ENCODE measurements at regions of chr14 and their contacts with region 1.

Region 1: GRCh38 chr14:32576088-32576795 is 247.1 kb downstream of the AKAP6 start:
- DNase-seq: peak in 2 of 5 donors; percentile 35 to 38
- ATAC-seq: peak; percentile 57 to 81 (median 78)
- H3K4me3 ChIP-seq: peak overlapping the region in 6 of 12 donors; percentile 2 to 43 (median 24)
- H3K27ac ChIP-seq: peak overlapping the region in 3 of 12 donors; percentile 2 to 23 (median 11)
- H3K4me1 ChIP-seq: peaks cover 0 to 43% (median 14%) of the 10 kb centered on the region in 12 donors
- H3K27me3 ChIP-seq: no peaks in the 10 kb centered on the region
- CTCF ChIP-seq: peak; percentile 90 to 98 (median 95)
- POLR2A ChIP-seq: no peak

Region 2: DNA sequence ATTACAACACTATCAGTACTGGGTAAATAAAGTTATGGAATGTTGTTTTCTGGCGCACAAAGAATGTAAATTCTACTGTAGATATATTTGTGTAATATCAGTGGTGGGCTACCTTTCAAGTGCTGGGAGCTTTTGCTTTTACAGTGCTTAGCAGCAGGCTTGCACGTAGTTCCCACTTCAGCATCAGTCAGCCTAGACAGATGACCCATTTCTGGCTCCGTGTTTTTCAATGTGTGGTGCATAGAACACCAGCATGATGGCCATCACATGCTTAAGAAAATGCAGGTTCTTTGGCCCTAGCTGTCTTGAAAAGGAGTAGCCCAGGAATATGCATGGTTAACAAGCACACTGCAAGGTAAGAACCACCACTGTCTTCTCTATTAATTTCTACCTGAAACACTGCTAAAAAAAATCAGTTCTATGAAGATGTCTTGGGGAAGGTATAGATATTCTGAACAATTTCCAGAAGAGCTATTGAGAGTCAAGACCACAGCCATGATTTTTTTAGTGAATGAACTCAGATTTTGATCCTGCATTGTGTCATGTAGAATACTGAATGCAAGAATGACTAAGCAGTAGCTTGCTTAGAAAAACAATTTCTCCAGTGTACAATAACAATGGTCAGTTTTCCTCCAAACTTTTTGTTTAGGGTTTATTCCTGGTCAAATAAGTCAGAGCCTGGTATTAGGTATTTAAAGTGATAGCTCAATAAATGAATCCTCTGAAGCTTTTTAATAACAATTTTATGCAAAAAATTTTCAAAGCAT is 51.5 kb before region 1 on chr14:
- intact Hi-C with region 1: no loop called
- DNase-seq: no peak
- ATAC-seq: peak in 3 of 4 donors; percentile 24 to 42 (median 36)
- H3K4me3 ChIP-seq: no peak overlapping the region
- H3K27ac ChIP-seq: peak overlapping the region in 2 of 12 donors; percentile 18 to 37
- H3K4me1 ChIP-seq: peaks cover 0 to 16% (median 2%) of the 10 kb centered on the region in 12 donors
- H3K27me3 ChIP-seq: no peaks in the 10 kb centered on the region
- CTCF ChIP-seq: no peak
- POLR2A ChIP-seq: no peak

Region 3: DNA sequence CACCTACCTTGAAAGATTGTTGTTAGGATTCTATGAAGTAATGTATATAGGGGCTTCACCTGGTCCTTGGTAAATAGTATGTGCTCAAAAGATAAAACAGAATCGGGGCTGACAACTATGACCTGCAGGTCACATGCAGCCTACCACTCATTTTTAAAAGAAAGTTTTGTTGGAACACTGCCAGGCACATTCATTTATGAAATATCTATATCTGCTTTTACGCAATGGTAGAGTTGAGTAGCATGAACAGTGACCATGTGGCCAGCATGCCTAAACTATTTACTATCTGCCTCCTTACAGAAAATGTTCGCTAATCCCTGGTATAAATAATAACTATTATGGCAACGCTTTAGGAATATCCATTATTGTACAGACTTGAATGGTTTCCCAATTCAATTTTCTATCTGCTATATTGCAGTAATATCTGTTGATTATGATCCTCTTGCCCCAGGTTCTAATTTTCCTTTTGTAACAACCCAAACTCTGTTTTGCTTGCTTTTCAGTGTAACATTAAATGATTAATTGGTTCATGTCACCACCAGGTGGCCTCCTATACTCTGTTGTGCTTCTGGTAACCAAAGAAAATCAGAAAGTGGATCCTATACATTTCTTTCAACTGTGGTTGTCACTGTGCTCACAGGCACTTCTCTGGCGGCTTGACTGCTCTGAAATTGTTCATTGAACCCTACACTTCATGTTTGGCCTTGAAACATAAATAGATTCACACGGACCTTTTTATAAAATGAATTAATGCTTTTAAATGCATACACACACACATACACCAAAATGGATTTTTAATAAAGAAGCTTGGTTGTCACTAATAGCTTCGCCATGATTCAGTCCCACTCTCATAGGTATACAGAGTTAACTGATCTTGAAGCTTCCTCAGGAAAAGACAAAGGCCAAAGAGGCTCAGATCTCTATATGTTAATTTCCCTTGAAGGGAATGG is 134.8 kb after region 1 on chr14:
- intact Hi-C with region 1: loop called in 3 of 10 experiments (anchors 5 to 10 kb)
- DNase-seq: peak in 1 of 5 donors; percentile 17
- ATAC-seq: peak in 1 of 4 donors; percentile 38
- H3K4me3 ChIP-seq: peak overlapping the region in 4 of 12 donors; percentile 7 to 24 (median 18)
- H3K27ac ChIP-seq: peak overlapping the region in 4 of 12 donors; percentile 12 to 79 (median 66)
- H3K4me1 ChIP-seq: peaks cover 5 to 45% (median 34%) of the 10 kb centered on the region in 12 donors
- H3K27me3 ChIP-seq: no peaks in the 10 kb centered on the region
- CTCF ChIP-seq: peak; percentile 31 to 70 (median 55)
- POLR2A ChIP-seq: no peak

Region 4: GRCh38 chr14:32939254-32940065 is 363.2 kb after region 1 on chr14:
- intact Hi-C with region 1: loop called in 2 of 10 experiments (anchors 10 kb)
- DNase-seq: peak; percentile 82 to 87 (median 84)
- ATAC-seq: peak; percentile 73 to 96 (median 92)
- H3K4me3 ChIP-seq: peak overlapping the region; percentile 25 to 69 (median 60)
- H3K27ac ChIP-seq: peak overlapping the region; percentile 55 to 88 (median 74)
- H3K4me1 ChIP-seq: peaks cover 0 to 23% (median 8%) of the 10 kb centered on the region in 12 donors
- H3K27me3 ChIP-seq: peaks cover 8 to 47% (median 30%) of the 10 kb centered on the region in 9 donors
- CTCF ChIP-seq: no peak
- POLR2A ChIP-seq: no peak

Region 5: GRCh38 chr14:33432407-33433023 is 856.3 kb after region 1 on chr14:
- intact Hi-C with region 1: loop called in 6 of 10 experiments (anchors 10 kb)
- DNase-seq: no peak
- ATAC-seq: no peak
- H3K4me3 ChIP-seq: no peak overlapping the region
- H3K27ac ChIP-seq: no peak overlapping the region
- H3K4me1 ChIP-seq: peaks cover 0 to 12% (median 0%) of the 10 kb centered on the region in 12 donors
- H3K27me3 ChIP-seq: no peaks in the 10 kb centered on the region
- CTCF ChIP-seq: peak in 11 of 12 donors; percentile 19 to 56 (median 39)
- POLR2A ChIP-seq: no peak

Region 6: DNA sequence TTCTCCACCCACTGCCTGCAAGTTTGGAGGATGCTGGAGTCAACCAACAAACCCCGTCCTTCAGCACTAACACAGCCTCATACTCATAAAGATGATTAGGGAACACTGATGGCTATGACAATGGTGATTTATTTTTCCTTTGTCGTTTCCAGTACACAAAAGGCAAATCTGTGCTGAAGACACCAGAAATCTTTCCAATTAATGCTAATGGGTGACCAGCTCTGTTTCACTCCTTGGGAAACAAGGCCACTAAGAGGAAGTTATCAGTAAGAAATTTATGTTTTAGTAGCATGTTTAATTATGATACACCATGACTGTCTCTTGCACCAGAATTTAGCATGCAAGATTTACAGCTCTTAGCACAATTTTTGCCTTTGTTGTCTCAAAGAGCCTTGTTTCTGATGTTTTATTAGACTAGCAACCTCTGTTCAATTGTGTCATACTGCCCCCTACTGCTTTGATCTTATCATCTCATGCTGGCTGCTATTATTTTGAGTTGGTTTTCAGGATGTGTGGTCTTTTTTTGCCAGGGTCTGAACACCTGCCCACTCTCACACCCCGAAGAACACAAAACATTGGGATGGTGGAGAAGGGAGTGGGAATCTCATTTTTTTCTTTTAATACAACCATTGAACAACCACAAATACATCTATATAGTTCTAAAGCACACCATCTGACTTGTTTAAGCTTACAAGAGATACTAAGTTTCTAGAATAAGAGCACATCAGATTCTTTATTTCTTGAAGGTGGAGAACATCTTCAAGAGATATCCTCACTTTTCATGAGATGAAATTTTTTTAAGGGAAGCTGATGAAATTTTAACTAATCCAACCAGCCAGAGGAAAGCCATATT is 1724.9 kb after region 1 on chr14:
- intact Hi-C with region 1: loop called in 1 of 10 experiments (anchors 10 kb)
- DNase-seq: no peak
- ATAC-seq: peak in 3 of 4 donors; percentile 38 to 70 (median 45)
- H3K4me3 ChIP-seq: no peak overlapping the region
- H3K27ac ChIP-seq: no peak overlapping the region
- H3K4me1 ChIP-seq: no peaks in the 10 kb centered on the region
- H3K27me3 ChIP-seq: no peaks in the 10 kb centered on the region
- CTCF ChIP-seq: peak; percentile 46 to 74 (median 62)
- POLR2A ChIP-seq: no peak

Measured in heart left ventricle (tissue), 16 donors.